GM12878 (cell line): ENCODE measurements at regions of chr6 and their contacts with region 1.

Region 1: GRCh38 chr6:227074-227782 is 65.1 kb upstream of the DUSP22 start:
- DNase-seq: peak; percentile 95
- ATAC-seq: peak; percentile 36
- H3K4me3 ChIP-seq: no peak overlapping the region
- H3K27ac ChIP-seq: peak overlapping the region; percentile 94
- H3K4me1 ChIP-seq: peaks cover 96% of the 10 kb centered on the region
- H3K27me3 ChIP-seq: no peaks in the 10 kb centered on the region
- CTCF ChIP-seq: peak; percentile 32 to 73 (median 60); a peak in 5 of 6 replicates
- EP300 ChIP-seq: peak in 1 of 2 experiments; percentile 75; a peak in 2 of 4 replicates
- POLR2A ChIP-seq: peak; percentile 50; the same call in 1 of the 2 replicates
- RAD21 ChIP-seq: peak; percentile 88

Region 2: DNA sequence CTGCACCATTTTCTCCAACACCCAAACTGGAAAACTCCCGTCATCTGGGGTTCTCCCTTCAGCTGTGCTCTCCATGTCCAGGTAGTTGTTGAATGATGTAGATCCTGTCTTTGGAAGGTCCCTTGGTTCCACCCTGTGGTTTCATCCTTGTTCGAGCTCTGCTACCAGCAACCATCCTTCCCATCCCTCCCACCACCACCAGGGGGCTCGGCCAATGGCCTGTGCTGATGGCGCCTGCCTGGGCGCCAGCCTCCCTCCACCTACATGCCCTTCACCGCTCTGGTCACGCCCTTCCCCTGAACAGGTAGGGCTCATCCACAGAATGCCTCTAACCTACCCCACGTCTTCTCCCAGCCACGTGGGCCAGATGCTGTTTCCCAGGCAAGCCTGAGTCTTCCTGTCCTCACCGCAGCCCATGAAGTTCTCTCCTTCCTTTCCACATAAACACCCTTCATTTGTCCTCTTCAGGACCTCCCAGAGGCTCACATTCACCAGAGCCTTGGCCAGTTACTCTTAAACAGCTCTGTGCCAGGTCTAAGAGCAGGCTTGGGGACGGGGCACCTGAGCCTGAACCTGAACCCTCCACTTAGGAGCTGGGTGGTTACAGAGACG is 10.1 kb before region 1 on chr6:
- CTCF ChIA-PET with region 1: interaction called, 49 read pairs
- POLR2A ChIA-PET with region 1: interaction called, 25 read pairs
- RAD21 ChIA-PET with region 1: interaction called, 119 read pairs
- SMC1A ChIA-PET with region 1: interaction called, 69 read pairs
- in situ Hi-C with region 1: no loop called
- intact Hi-C with region 1: loop called (anchors 1 kb)
- DNase-seq: peak; percentile 55
- ATAC-seq: 0 out of 3 replicates have a peak, but pooled peaks have one; percentile 1
- H3K4me3 ChIP-seq: peak overlapping the region; percentile 13; the same call in 1 of the 2 replicates
- H3K27ac ChIP-seq: peak overlapping the region; percentile 94
- H3K4me1 ChIP-seq: peaks cover 86% of the 10 kb centered on the region
- H3K27me3 ChIP-seq: no peaks in the 10 kb centered on the region
- CTCF ChIP-seq: peak; percentile 57 to 73 (median 73)
- EP300 ChIP-seq: no peak
- POLR2A ChIP-seq: no peak
- RAD21 ChIP-seq: peak; percentile 54

Region 3: DNA sequence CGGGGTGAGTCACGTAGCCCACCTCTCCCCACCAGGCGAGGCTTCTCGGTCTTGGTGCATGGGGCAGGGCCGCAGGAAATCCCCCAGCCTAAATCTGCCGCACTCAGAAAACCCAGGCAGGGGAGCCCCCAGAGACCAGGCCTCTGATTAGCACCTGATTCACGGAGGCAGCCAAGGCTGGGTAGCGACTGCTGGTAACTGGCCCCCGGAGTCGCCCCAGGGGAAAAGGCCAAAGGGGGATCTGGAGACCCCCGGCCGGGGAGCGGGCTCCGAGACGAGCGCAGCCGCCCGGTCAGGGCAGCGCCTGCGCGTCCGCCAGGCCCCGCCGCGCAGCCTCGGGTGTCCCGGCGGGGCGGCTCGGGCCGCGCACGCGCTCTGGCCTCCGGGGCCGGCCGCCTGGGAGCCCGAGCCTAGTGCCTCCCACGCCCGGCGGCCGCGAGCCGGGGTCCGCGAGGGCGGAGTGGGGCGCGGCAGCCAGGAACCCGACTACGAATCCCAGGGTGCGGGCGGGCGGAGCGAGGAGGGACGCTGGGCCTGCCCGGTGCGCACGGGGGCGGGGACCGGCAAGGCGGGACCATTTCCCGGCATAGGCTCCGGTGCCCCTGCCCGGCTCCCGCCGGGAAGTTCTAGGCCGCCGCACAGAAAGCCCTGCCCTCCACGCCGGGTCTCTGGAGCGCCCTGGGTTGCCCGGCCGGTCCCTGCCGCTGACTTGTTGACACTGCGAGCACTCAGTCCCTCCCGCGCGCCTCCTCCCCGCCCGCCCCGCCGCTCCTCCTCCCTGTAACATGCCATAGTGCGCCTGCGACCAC is 64.7 kb after region 1 on chr6 and contains the start of gene DUSP22:
- CTCF ChIA-PET with region 1: interaction called, 15 read pairs
- POLR2A ChIA-PET with region 1: interaction called, 39 read pairs
- RAD21 ChIA-PET with region 1: interaction called, 60 read pairs
- SMC1A ChIA-PET with region 1: interaction called, 150 read pairs
- in situ Hi-C with region 1: no loop called
- intact Hi-C with region 1: loop called (anchors 1 kb)
- DNase-seq: peak; percentile 81
- ATAC-seq: peak; percentile 45
- H3K4me3 ChIP-seq: peak within 1 kb of the TSS; percentile 78
- H3K27ac ChIP-seq: peak within 1 kb of the TSS; percentile 100
- H3K4me1 ChIP-seq: peaks cover 64% of the 10 kb centered on the region
- H3K27me3 ChIP-seq: no peaks in the 10 kb centered on the region
- CTCF ChIP-seq: no peak
- EP300 ChIP-seq: peak; percentile 53 to 76; a peak in 2 of 4 replicates
- POLR2A ChIP-seq: no peak
- RAD21 ChIP-seq: peak; percentile 42
- polyA plus RNA-seq, gene DUSP22: 93.4 to 99.7 TPM

Region 4: DNA sequence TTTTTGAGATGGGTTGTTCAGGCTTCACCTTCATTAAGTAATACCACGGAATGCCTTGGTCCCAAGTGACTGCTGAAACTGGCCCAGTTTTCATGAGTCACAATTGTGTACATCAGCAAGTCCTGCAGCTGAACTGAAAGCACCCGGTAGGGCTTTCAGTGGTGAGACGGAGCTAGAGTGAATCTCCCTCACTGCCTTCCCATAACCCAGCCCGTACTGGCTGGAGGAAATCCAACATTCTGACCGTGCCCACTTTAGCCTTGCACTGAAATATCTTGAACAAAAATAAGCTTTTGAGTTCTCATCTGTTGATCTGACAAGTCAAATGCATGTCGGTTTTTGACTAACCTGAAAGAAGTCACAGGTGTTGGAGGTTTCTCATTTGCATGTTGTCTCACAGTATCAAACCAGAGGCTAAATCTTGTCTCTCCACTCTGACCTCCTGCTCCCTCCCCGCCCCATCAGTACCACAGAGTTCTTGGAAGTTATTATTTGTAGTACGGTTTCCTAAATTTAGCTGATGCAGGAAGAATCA is 101.0 kb after region 1 on chr6:
- CTCF ChIA-PET with region 1: interaction called, 18 read pairs
- POLR2A ChIA-PET with region 1: interaction called, 5 read pairs
- RAD21 ChIA-PET with region 1: interaction called, 131 read pairs
- SMC1A ChIA-PET with region 1: interaction called, 37 read pairs
- in situ Hi-C with region 1: no loop called
- intact Hi-C with region 1: loop called (anchors 1 kb)
- DNase-seq: peak; percentile 100
- ATAC-seq: peak; percentile 76
- H3K4me3 ChIP-seq: peak overlapping the region; percentile 37
- H3K27ac ChIP-seq: peak overlapping the region; percentile 97
- H3K4me1 ChIP-seq: peaks cover 85% of the 10 kb centered on the region
- H3K27me3 ChIP-seq: no peaks in the 10 kb centered on the region
- CTCF ChIP-seq: no peak
- EP300 ChIP-seq: peak; percentile 87 to 96
- POLR2A ChIP-seq: no peak
- RAD21 ChIP-seq: 0 out of 2 replicates have a peak, but pooled peaks have one; percentile 32

Region 5: DNA sequence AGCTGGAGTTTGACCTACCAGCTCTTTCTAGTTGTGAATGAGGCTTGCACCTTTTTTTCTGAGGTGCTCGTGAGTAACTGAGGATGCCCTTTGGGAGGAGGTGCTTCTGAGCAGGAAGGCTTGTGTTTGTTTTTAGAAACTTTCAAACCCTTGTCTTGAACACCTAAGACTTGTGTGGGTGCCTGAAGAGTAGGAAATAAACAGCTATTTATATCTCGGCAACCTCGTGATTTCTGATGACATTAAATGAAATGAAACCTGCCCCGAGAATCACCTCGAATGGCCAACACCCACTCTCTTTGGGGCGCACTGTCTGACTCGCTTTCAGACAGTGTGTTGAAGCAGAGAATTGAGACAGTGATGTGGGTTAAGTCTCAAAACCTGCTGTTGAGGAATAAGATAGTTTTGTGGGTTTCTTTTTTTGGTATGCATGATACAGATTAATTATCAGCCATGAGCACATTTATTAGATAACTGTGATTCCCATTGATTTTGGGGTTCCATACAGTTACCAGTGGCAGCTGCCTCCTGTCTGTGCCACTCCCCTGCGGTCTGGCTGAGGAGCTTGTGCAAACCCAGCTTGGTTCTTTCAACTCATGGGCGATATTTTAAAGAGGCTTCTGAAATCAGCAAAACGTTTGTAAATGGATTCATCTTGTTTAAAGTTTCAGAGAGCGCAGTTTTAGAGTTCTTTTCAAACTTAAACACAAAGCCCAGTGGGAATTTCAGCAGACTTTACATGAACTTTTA is 172.7 kb after region 1 on chr6:
- CTCF ChIA-PET with region 1: interaction called, 21 read pairs
- POLR2A ChIA-PET with region 1: interaction called, 7 read pairs
- RAD21 ChIA-PET with region 1: interaction called, 43 read pairs
- SMC1A ChIA-PET with region 1: interaction called, 185 read pairs
- in situ Hi-C with region 1: no loop called
- intact Hi-C with region 1: no loop called
- DNase-seq: no peak
- ATAC-seq: peak; percentile 10
- H3K4me3 ChIP-seq: peak overlapping the region; percentile 61
- H3K27ac ChIP-seq: peak overlapping the region; percentile 39
- H3K4me1 ChIP-seq: peaks cover 35% of the 10 kb centered on the region
- H3K27me3 ChIP-seq: no peaks in the 10 kb centered on the region
- CTCF ChIP-seq: no peak
- EP300 ChIP-seq: peak; percentile 56 to 84; a peak in 2 of 4 replicates
- POLR2A ChIP-seq: peak; percentile 89
- RAD21 ChIP-seq: 0 out of 2 replicates have a peak, but pooled peaks have one; percentile 1

Region 6: DNA sequence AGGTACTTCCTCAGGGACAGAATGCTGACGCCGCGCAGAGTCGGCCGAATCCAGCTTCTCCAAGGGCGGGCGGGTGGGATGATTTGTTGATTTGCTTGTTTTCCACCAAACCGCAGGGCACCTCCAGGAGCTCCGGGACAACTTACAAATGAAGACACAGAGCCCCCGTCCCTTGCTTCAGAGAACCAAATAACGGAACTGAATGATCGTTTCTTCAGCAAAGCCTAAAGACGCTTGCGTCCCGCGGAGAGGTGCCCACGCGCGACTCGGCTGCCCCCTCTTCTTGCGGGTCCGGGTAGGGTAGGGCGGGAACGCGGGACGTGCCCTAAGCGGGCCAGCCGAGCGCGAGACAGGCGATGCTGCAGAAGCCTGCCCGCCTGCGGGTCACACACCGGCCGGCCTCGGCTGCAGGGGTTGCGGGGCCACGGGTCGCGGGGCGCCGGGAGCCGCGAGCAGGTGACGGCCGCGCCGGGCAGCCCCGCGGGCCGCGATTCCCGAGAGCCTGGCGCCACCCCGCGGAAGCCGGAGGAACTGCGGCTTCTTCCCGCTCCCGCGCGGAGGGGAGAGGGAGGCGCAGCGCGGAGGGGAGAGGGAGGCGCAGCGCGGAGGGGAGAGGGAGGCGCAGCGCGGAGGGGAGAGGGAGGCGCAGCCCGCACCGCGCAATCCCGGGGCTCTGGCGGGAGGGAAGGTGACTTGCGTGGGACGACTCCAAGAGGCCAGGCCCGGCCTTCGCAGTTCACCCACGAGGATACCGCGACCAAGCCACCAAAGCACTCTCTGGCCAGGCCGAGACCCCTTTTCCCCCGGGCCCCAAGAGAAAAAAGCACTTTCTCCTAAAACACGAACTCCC is 1154.5 kb after region 1 on chr6:
- CTCF ChIA-PET with region 1: interaction called, 13 read pairs
- POLR2A ChIA-PET with region 1: no interaction called
- RAD21 ChIA-PET with region 1: interaction called, 5 read pairs
- SMC1A ChIA-PET with region 1: no interaction called
- in situ Hi-C with region 1: no loop called
- intact Hi-C with region 1: no loop called
- DNase-seq: no peak
- ATAC-seq: peak; percentile 90
- H3K4me3 ChIP-seq: no peak overlapping the region
- H3K27ac ChIP-seq: no peak overlapping the region
- H3K4me1 ChIP-seq: no peaks in the 10 kb centered on the region
- H3K27me3 ChIP-seq: peaks cover 25 to 48% of the 10 kb centered on the region in 2 experiments
- CTCF ChIP-seq: peak; percentile 64 to 75 (median 67)
- EP300 ChIP-seq: no peak
- POLR2A ChIP-seq: no peak
- RAD21 ChIP-seq: peak; percentile 81